ENCODE measurements at regions of chr19 and their contacts with region 1.

Region 1: GRCh38 chr19:17841810-17842662 is 5.7 kb downstream of the JAK3 start:
- DNase-seq: peak; percentile 90
- ATAC-seq: peak; percentile 89
- H3K4me3 Mint-ChIP-seq: no peak overlapping the region
- H3K27ac Mint-ChIP-seq: no peak overlapping the region
- H3K4me1 Mint-ChIP-seq: peaks cover 36% of the 10 kb centered on the region
- H3K27me3 Mint-ChIP-seq: no peaks in the 10 kb centered on the region

Region 2: DNA sequence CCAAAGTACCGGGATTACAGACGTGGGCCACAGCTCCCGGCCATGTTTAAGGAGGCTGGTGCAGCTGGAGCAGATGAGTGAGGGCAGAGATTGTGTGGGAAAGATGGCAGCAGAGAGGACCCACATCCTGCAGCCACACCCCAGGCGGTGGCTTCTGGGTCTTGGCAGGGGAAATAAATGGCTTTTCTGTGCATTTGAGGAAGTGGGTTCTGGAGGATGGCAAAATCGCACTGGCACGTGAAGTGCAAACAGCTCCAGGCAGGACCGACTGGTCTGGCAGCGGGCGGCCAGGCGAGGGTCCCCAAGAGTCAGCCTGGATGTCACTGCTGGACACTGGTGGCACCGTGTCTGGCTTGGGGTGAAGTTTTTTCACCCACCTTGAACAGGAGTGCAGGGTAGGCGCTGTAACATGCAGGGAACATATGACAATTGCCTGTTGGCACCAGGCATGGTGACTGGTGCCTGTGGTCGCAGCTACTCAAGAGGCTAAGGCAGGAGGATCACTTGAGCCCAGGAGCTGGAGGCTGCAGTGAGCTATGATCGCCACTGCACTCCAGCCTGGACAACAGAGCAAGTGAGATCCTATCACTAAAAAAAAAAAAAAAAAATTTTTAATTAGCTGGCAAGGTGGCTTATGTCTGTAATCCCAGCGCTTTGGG is 38.6 kb before region 1 on chr19:
- CTCF ChIA-PET with region 1: no interaction called
- POLR2A ChIA-PET with region 1: no interaction called
- intact Hi-C with region 1: loop called in 1 of 2 experiments (anchors 5 kb)
- DNase-seq: peak; percentile 41
- ATAC-seq: peak; percentile 39
- H3K4me3 Mint-ChIP-seq: no peak overlapping the region
- H3K27ac Mint-ChIP-seq: peak overlapping the region; percentile 72
- H3K4me1 Mint-ChIP-seq: peaks cover 33% of the 10 kb centered on the region
- H3K27me3 Mint-ChIP-seq: no peaks in the 10 kb centered on the region

Region 3: DNA sequence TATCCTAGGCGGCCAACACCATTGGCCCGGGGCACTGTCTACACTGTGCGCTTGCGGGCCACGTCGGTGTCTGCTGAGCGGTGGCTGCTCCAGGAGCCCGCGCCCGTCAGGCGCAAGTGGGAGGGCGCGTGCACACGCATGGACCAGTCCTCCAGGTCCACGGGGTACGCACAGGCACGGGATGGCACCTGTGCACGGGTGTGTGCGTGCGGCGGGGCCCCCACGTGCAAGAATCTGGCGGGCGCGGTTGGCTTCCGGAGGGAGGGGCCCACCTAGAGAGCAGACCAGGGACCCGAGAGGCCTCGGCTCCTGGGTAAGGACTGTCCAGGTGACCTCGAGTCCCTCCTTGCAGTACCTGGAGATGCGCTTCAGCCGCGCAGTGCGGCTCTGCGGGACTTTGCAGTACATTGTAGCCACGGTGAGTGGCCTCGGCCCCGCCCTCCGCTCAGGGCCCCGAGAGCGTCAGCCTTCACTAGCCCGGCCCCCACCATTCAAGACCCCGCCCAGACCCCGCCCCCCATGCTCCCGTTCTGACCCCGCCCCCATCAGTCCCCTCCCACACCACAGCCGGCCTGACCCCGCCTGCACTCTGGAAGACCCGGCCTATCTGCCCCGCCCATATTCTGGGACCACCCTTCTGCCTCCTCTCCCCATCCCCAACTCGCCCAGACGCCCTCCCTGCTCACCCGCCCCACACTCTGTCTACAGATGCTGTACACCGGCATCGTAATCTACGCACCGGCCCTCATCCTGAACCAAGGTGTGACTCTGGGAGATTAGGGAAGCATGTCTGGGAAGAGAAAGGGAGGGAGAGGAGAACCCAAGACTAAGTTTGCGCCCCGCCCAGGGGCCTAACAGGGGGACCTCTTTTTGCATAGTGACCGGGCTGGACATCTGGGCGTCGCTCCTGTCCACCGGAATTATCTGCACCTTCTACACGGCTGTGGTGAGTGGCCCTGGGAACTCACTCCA is 32.0 kb after region 1 on chr19:
- CTCF ChIA-PET with region 1: no interaction called
- POLR2A ChIA-PET with region 1: interaction called, 3 read pairs
- intact Hi-C with region 1: loop called in 1 of 2 experiments (anchors 1 kb)
- DNase-seq: peak; percentile 89
- ATAC-seq: peak; percentile 83
- H3K4me3 Mint-ChIP-seq: peak overlapping the region; percentile 78
- H3K27ac Mint-ChIP-seq: peak overlapping the region; percentile 25
- H3K4me1 Mint-ChIP-seq: peaks cover 17% of the 10 kb centered on the region
- H3K27me3 Mint-ChIP-seq: no peaks in the 10 kb centered on the region

Region 4: GRCh38 chr19:18083929-18084684 is 242.1 kb after region 1 on chr19:
- CTCF ChIA-PET with region 1: no interaction called
- POLR2A ChIA-PET with region 1: no interaction called
- intact Hi-C with region 1: no loop called
- DNase-seq: no peak
- ATAC-seq: no peak
- H3K4me3 Mint-ChIP-seq: no peak overlapping the region
- H3K27ac Mint-ChIP-seq: peak overlapping the region; percentile 42
- H3K4me1 Mint-ChIP-seq: peaks cover 48% of the 10 kb centered on the region
- H3K27me3 Mint-ChIP-seq: no peaks in the 10 kb centered on the region

Region 5: GRCh38 chr19:18131841-18132596 is 290.0 kb after region 1 on chr19:
- CTCF ChIA-PET with region 1: no interaction called
- POLR2A ChIA-PET with region 1: no interaction called
- intact Hi-C with region 1: no loop called
- DNase-seq: peak; percentile 46
- ATAC-seq: peak; percentile 53
- H3K4me3 Mint-ChIP-seq: no peak overlapping the region
- H3K27ac Mint-ChIP-seq: no peak overlapping the region
- H3K4me1 Mint-ChIP-seq: no peaks in the 10 kb centered on the region
- H3K27me3 Mint-ChIP-seq: no peaks in the 10 kb centered on the region

Region 6: GRCh38 chr19:19385108-19385899 is 1543.3 kb after region 1 on chr19:
- CTCF ChIA-PET with region 1: no interaction called
- POLR2A ChIA-PET with region 1: no interaction called
- intact Hi-C with region 1: no loop called
- DNase-seq: peak; percentile 100
- ATAC-seq: peak; percentile 96
- H3K4me3 Mint-ChIP-seq: peak overlapping the region; percentile 86
- H3K27ac Mint-ChIP-seq: peak overlapping the region; percentile 78
- H3K4me1 Mint-ChIP-seq: peaks cover 36% of the 10 kb centered on the region
- H3K27me3 Mint-ChIP-seq: no peaks in the 10 kb centered on the region

Measured in activated CD4-positive, alpha-beta T cell treated with anti-CD3 and anti-CD28 coated beads for 36 hours (primary cell).